A673 (cell line): ENCODE measurements at regions of chr4 and their contacts with region 1.

Region 1: DNA sequence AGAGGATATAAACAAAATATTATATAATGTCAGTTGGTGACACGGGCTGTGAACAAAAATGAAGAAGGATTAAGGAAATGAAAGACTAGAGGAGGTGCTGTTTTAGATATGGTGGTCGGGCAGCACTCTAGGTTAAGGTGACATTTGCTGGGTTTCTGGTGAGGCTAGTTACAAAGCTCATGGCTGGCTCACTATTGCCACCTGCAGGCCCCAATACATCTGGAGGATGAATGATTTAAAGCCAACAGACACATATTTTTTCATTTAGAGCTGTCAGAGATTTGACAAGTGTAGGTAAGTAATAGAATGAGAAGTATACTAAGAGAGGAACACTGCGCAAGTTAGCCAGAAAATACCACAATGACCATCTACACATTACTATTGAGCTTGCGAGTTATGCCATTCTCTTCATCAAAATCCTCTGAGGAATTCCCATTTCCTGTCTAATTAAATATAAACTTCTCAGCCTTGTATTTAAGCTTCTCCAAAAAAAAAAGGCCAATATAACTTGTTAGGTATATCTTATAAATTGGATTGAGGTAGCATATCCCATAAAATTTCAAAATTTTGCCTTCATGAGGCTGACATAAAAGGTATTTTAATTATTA is 6.4 kb upstream of the FGG start:
- DNase-seq: peak; percentile 56
- H3K4me3 ChIP-seq: no peak overlapping the region
- H3K27ac ChIP-seq: no peak overlapping the region
- H3K4me1 ChIP-seq: no peaks in the 10 kb centered on the region
- H3K27me3 ChIP-seq: no peaks in the 10 kb centered on the region
- CTCF ChIP-seq: peak; percentile 75

Region 2: GRCh38 chr4:153159728-153160221 is 1459.0 kb before region 1 on chr4:
- CTCF ChIA-PET with region 1: no interaction called
- POLR2A ChIA-PET with region 1: no interaction called
- intact Hi-C with region 1: no loop called
- DNase-seq: peak; percentile 54
- H3K4me3 ChIP-seq: peak overlapping the region; percentile 7
- H3K27ac ChIP-seq: peak overlapping the region; percentile 51
- H3K4me1 ChIP-seq: peaks cover 46% of the 10 kb centered on the region
- H3K27me3 ChIP-seq: no peaks in the 10 kb centered on the region
- CTCF ChIP-seq: no peak

Region 3: GRCh38 chr4:154231806-154232478 is 386.9 kb before region 1 on chr4:
- CTCF ChIA-PET with region 1: interaction called, 10 read pairs
- POLR2A ChIA-PET with region 1: no interaction called
- intact Hi-C with region 1: no loop called
- DNase-seq: no peak
- H3K4me3 ChIP-seq: no peak overlapping the region
- H3K27ac ChIP-seq: no peak overlapping the region
- H3K4me1 ChIP-seq: no peaks in the 10 kb centered on the region
- H3K27me3 ChIP-seq: no peaks in the 10 kb centered on the region
- CTCF ChIP-seq: no peak

Region 4: DNA sequence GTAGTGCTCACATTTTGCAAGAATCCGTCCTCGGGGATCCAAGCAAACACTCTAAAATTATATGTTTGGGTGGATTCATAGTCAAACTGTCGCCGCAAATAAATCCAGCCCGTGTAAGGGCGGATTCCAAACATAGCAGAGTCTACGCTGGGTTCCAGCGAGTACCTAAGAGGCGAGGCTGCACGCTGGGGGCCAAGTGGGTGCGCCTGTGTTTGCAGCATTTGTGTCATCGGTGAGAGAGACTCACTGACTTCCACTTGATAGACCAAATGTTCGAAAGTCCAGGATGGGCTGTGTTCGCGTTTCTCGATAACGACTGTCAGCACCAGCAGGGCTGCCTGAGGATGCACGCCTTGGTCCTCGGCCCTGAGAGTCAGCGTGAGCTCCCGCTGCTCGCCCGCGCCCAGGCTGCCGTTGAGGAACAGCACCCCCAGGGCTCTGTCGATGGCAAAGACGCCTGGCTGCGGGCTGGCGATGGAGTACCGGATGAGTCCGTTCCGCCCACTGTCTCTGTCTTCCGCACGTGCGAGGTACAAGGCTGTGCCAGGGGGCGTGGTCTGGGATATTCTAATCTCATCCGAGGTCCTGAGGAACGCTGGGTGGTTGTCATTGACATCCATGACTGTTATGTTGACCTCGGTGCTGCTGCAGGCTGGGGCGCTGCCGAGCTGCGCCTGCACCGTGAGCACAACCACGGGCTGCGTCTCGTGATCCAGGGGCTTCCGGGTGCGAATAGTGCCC is 286.0 kb before region 1 on chr4:
- CTCF ChIA-PET with region 1: no interaction called
- POLR2A ChIA-PET with region 1: no interaction called
- intact Hi-C with region 1: loop called (anchors 5 kb)
- DNase-seq: peak; percentile 38
- H3K4me3 ChIP-seq: peak overlapping the region; percentile 14
- H3K27ac ChIP-seq: no peak overlapping the region
- H3K4me1 ChIP-seq: no peaks in the 10 kb centered on the region
- H3K27me3 ChIP-seq: no peaks in the 10 kb centered on the region
- CTCF ChIP-seq: 0 out of 2 replicates have a peak, but pooled peaks have one; percentile 13

Region 5: GRCh38 chr4:154551872-154552686 is 66.7 kb before region 1 on chr4:
- CTCF ChIA-PET with region 1: interaction called, 7 read pairs
- POLR2A ChIA-PET with region 1: no interaction called
- intact Hi-C with region 1: loop called (anchors 1 kb)
- DNase-seq: peak; percentile 81
- H3K4me3 ChIP-seq: no peak overlapping the region
- H3K27ac ChIP-seq: no peak overlapping the region
- H3K4me1 ChIP-seq: peaks cover 11% of the 10 kb centered on the region
- H3K27me3 ChIP-seq: no peaks in the 10 kb centered on the region
- CTCF ChIP-seq: peak; percentile 84

Region 6: GRCh38 chr4:154559494-154560418 is 59.1 kb before region 1 on chr4:
- CTCF ChIA-PET with region 1: interaction called, 38 read pairs
- POLR2A ChIA-PET with region 1: no interaction called
- intact Hi-C with region 1: loop called (anchors 1 kb)
- DNase-seq: peak; percentile 70
- H3K4me3 ChIP-seq: no peak overlapping the region
- H3K27ac ChIP-seq: no peak overlapping the region
- H3K4me1 ChIP-seq: no peaks in the 10 kb centered on the region
- H3K27me3 ChIP-seq: no peaks in the 10 kb centered on the region
- CTCF ChIP-seq: peak; percentile 68

Region 7: GRCh38 chr4:154738426-154738825 is 119.6 kb after region 1 on chr4:
- CTCF ChIA-PET with region 1: no interaction called
- POLR2A ChIA-PET with region 1: no interaction called
- intact Hi-C with region 1: no loop called
- DNase-seq: peak; percentile 19
- H3K4me3 ChIP-seq: no peak overlapping the region
- H3K27ac ChIP-seq: no peak overlapping the region
- H3K4me1 ChIP-seq: peaks cover 14% of the 10 kb centered on the region
- H3K27me3 ChIP-seq: no peaks in the 10 kb centered on the region
- CTCF ChIP-seq: no peak